ENCODE measurements at regions of chr2 and their contacts with region 1.

Region 1: GRCh38 chr2:219689676-219690628 is 62.5 kb downstream of the SLC4A3 start:
- DNase-seq: peak; percentile 66
- ATAC-seq: peak; percentile 57
- H3K4me3 Mint-ChIP-seq: no peak overlapping the region
- H3K27ac Mint-ChIP-seq: no peak overlapping the region
- H3K4me1 Mint-ChIP-seq: peaks cover 1% of the 10 kb centered on the region
- H3K27me3 Mint-ChIP-seq: peaks cover 23% of the 10 kb centered on the region
- CTCF ChIP-seq: peak; percentile 77

Region 2: DNA sequence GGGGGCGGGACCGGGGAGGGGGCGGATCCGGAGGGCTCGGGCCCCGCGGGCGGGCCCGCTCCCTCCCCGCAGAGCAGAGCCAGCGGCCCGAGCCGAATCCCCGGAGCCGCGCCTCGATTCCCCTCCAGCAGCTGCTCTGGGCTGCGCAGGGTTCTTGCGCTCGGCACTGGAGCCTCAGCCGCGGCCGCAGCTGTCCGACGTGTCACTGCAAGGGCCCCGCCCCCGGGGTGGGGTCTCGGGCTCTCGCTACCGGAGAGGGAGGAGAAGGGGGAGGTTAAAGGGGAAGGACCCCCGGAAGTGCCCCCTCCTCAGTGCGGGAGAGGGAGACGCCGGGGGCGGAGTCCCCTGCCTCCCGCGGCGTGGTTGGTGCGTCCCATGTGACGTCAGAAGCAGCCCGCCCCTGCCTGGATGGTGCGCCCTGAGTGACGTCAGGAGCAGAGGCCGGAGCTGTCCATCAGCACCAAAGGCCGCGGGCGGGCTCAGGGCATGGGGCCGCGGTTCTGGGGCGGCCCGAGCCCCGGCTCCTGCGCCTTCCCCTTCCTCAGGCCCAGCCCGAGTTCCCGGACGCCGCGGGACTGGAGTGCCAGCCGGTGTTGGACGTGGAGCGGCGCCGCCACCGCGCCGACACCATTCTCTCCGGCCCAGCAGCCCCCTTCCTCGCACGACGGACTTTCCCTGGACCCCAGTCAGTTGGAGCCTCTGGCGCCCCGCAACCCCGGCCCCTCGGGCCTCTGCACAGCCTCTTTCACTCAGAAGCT is 146.2 kb before region 1 on chr2 and contains the starts of genes CHPF and TMEM198:
- CTCF ChIA-PET with region 1: interaction called, 27 read pairs
- POLR2A ChIA-PET with region 1: no interaction called
- intact Hi-C with region 1: loop called (anchors 5 kb)
- DNase-seq: peak; percentile 97
- ATAC-seq: peak; percentile 85
- H3K4me3 Mint-ChIP-seq: peak within 1 kb of the TSS; percentile 93
- H3K27ac Mint-ChIP-seq: peak within 1 kb of the TSS; percentile 77
- H3K4me1 Mint-ChIP-seq: peaks cover 21% of the 10 kb centered on the region
- H3K27me3 Mint-ChIP-seq: peaks cover 15% of the 10 kb centered on the region
- CTCF ChIP-seq: no peak
- total RNA-seq, gene CHPF: 16.6 to 18.4 TPM
- total RNA-seq, gene TMEM198: 2.1 to 2.2 TPM

Region 3: GRCh38 chr2:219642465-219643080 is 47.4 kb before region 1 on chr2:
- CTCF ChIA-PET with region 1: interaction called, 13 read pairs
- POLR2A ChIA-PET with region 1: no interaction called
- intact Hi-C with region 1: no loop called
- DNase-seq: peak; percentile 97
- ATAC-seq: peak; percentile 100
- H3K4me3 Mint-ChIP-seq: no peak overlapping the region
- H3K27ac Mint-ChIP-seq: no peak overlapping the region
- H3K4me1 Mint-ChIP-seq: peaks cover 12% of the 10 kb centered on the region
- H3K27me3 Mint-ChIP-seq: peaks cover 14% of the 10 kb centered on the region
- CTCF ChIP-seq: peak; percentile 98

Region 4: DNA sequence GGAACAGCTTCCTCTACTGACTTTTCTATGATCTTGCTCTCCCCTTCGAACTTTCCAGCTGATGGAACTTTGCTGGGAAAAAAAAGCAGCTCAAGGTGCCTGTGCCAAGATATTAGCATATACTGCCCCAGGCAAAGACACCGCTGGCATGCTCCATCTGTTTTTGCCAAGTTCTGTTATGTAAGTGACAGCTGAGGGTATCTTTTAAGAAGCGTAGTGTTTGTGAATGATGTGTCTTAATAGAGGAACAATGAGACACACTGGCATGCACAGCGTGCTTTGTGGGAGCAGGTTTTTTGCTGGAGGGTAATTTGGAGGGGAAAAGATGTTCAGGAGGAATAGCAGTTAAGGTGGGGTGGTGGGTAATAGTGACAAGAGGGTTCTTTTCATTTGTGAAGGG is 14.7 kb before region 1 on chr2:
- CTCF ChIA-PET with region 1: interaction called, 14 read pairs
- POLR2A ChIA-PET with region 1: interaction called, 3 read pairs
- intact Hi-C with region 1: no loop called
- DNase-seq: no peak
- ATAC-seq: no peak
- H3K4me3 Mint-ChIP-seq: no peak overlapping the region
- H3K27ac Mint-ChIP-seq: no peak overlapping the region
- H3K4me1 Mint-ChIP-seq: no peaks in the 10 kb centered on the region
- H3K27me3 Mint-ChIP-seq: peaks cover 24% of the 10 kb centered on the region
- CTCF ChIP-seq: no peak

Region 5: DNA sequence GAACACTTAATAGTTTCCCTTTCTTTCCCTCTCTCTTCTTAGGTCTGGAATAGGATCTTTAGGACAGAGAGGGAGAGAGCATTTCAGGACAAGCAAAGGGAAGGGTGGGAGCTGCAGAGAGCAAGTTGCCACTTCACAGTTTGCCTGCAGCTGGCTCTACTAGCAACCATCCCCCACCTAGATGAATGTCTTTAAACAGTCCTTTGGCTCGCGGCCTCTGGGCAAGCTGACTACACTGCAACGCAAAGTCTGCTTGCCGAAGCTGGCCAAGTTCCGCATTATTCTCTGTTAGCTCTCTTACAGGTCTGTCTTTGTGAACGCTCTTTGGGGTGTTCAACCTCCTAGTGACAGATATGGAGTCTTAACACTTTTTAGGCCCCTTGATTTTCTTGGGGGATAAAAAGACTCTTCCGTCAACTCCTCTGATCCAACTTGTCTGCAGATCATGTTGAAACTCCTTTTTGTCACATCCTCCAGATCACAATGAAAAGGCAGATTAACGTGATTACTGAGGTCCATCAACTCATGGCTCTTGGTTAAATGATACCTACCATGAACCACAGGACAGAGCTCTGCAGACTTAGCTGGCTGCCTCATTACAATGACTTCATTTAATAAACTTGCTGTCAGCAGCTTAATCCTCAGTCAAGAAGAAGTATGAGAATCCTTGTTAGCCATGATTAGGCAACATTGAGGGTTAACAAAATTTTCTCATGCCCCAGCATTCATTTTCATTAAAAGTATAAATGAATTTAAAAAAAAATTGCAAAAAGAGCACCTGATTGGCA is 12.1 kb after region 1 on chr2:
- CTCF ChIA-PET with region 1: interaction called, 16 read pairs
- POLR2A ChIA-PET with region 1: no interaction called
- intact Hi-C with region 1: no loop called
- DNase-seq: no peak
- ATAC-seq: no peak
- H3K4me3 Mint-ChIP-seq: no peak overlapping the region
- H3K27ac Mint-ChIP-seq: no peak overlapping the region
- H3K4me1 Mint-ChIP-seq: no peaks in the 10 kb centered on the region
- H3K27me3 Mint-ChIP-seq: peaks cover 17% of the 10 kb centered on the region
- CTCF ChIP-seq: no peak